ENCODE measurements at regions of chr18 and their contacts with region 1.

Region 1: DNA sequence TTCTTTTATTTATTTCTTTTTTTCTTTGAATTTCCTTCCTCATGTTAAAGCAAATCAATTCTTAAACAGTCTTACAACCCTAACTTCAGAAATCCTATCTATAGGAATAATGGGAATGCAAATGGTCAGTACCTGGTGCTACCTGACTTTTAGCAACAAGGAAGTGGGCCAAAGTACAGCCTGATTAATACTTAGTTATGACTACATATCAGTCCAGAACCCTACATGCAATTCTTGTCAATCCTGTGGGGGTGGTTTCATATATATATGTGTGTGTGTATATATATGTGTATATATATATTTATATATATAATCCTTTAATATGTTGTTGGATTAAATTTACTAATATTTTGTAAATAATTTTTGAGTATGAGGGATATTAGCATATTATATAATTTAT is 14.8 kb upstream of the TRAPPC8 start:
- DNase-seq: no peak
- H3K4me3 Mint-ChIP-seq: no peak overlapping the region
- H3K27ac Mint-ChIP-seq: no peak overlapping the region
- H3K4me1 Mint-ChIP-seq: peaks cover 1% of the 10 kb centered on the region
- H3K27me3 Mint-ChIP-seq: no peaks in the 10 kb centered on the region

Region 2: DNA sequence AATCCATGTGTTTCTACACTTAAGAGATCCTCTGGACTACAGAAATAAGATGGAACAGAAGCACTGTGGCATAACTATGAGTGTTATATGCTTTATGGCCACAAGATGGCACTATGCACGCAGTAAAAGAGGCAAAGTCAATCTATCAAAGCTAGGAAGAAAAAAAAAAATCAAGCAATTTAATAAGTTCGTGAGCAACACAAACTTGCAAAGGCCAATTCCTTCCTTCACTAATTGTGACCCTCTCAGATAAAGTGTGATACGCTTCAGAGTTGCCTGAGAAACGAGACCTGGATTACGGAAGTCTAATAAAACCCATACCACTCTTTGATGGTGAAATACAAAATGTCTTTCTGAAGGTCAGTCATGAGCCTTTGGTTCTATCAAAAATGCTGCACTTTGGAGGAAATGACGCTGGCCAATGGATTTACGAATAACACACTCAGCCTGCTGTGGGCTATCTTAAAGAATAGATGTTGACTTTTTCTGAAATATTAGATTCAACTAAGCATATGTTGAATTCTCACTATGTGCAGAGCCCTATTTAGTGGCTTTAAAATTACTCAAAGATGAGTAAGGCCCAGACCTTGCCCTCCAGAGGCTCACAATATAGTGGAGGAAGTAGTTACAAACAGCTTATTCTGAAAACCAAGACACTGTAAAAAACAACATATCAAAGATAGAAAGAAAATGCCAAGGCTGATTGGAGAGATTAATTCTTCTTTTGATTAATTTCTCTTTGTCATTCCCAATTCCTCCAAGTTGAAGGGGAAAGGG is 401.6 kb before region 1 on chr18:
- intact Hi-C with region 1: loop called (anchors 5 kb)
- DNase-seq: no peak
- H3K4me3 Mint-ChIP-seq: no peak overlapping the region
- H3K27ac Mint-ChIP-seq: no peak overlapping the region
- H3K4me1 Mint-ChIP-seq: no peaks in the 10 kb centered on the region
- H3K27me3 Mint-ChIP-seq: peaks cover 7% of the 10 kb centered on the region

Region 3: GRCh38 chr18:31648966-31649429 is 308.7 kb before region 1 on chr18:
- intact Hi-C with region 1: no loop called
- DNase-seq: no peak
- H3K4me3 Mint-ChIP-seq: no peak overlapping the region
- H3K27ac Mint-ChIP-seq: no peak overlapping the region
- H3K4me1 Mint-ChIP-seq: peaks cover 27% of the 10 kb centered on the region
- H3K27me3 Mint-ChIP-seq: peaks cover 25% of the 10 kb centered on the region

Region 4: DNA sequence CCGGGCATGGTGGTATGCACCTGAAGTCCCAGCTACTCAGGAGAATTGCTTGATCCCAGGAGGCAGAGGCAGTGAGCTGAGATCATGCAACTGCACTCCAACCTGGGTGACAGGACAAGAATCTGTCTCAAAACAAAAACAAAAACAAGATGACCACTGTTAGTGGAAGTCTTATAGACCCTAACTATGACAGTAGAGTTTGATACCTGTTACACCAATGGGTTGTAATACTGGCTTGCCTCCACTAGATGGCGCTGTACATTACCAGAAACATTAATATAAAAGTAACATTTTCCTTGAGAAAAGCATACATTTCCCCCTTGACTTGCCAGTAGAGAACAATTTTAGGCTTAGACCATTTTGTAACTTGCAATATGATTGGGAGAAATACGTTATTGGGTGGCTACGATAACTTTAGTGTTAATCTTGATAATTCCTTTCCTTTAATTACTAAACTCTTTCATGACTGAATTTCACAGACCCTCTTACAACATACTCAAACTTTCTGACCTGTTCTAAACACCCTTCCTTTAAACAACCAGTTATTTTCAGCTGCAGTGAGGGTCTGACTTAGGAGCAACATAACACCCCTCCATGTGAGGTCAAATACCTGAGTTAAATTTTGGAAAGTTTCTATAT is 216.5 kb before region 1 on chr18:
- intact Hi-C with region 1: loop called (anchors 2 kb)
- DNase-seq: no peak
- H3K4me3 Mint-ChIP-seq: no peak overlapping the region
- H3K27ac Mint-ChIP-seq: no peak overlapping the region
- H3K4me1 Mint-ChIP-seq: no peaks in the 10 kb centered on the region
- H3K27me3 Mint-ChIP-seq: no peaks in the 10 kb centered on the region

Region 5: DNA sequence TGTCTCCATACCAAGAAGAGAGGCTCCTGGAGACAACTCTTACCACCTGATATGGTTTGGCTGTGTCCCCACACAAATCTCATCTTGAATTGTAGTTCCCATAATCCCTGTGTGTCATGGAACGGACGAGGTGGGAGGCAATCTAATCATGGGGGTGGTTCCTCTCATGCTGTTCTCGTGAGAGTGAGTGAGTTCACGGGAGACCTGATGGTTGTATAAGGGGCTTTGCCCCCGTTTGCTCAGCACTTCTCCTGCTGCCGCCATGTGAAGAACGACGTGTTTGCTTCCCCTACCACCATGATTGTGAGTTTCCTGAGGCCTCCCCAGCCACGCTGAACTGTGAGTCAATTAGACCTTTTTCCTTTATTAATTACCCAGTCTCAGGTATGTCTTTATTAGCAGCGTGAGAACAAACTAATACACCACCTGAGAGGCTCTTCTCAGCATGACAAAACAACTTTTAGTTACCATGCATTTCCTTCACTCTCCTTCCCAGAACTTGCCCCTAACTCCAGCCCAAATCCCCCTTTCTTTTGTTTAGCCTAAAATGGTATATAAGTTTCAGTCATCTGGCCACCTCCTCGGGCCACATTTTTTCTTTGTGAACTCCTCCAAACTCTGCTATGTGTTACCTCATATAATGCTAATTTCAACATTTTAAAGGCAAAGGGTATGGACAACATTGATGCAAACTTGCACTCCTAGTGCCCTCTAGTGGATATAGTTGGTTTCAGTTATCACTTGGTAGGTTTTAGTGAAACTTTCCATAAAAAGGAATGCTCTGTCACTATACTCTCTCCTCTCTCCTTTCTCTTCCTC is 138.4 kb before region 1 on chr18:
- intact Hi-C with region 1: loop called (anchors 2 kb)
- DNase-seq: no peak
- H3K4me3 Mint-ChIP-seq: no peak overlapping the region
- H3K27ac Mint-ChIP-seq: no peak overlapping the region
- H3K4me1 Mint-ChIP-seq: no peaks in the 10 kb centered on the region
- H3K27me3 Mint-ChIP-seq: peaks cover 8% of the 10 kb centered on the region

Region 6: DNA sequence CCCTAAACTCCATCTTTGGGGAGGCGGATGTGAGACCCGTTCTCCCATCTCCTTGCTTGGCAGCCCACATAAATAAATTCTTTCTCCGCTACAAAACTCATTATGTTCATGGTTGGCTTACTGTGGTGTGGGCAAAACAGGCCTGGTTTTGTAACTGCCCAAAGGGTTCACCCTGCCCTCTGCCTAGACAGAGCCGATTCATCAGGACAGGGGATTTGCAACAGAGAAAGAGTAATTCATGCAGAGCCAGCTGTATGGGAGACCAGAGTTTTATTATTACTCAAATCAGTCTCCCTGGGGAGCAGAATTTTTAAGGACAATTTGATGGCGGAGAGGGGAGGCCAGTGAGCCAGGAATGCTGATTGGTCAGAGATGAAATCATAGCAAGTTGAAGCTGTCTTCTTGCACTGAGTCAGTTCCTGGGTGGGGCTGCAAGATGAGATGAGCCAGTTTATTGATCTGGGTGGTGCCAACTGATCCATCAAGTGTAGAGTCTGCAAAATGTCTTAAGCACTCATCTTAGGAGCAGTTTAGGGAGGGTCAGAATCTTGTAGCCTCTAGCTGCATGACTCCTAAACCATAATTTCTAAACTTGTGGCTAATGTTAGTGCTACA is 52.5 kb after region 1 on chr18:
- intact Hi-C with region 1: no loop called
- DNase-seq: no peak
- H3K4me3 Mint-ChIP-seq: no peak overlapping the region
- H3K27ac Mint-ChIP-seq: no peak overlapping the region
- H3K4me1 Mint-ChIP-seq: peaks cover 11% of the 10 kb centered on the region
- H3K27me3 Mint-ChIP-seq: no peaks in the 10 kb centered on the region

Region 7: GRCh38 chr18:32383050-32383819 is 425.5 kb after region 1 on chr18:
- intact Hi-C with region 1: no loop called
- DNase-seq: no peak
- H3K4me3 Mint-ChIP-seq: no peak overlapping the region
- H3K27ac Mint-ChIP-seq: no peak overlapping the region
- H3K4me1 Mint-ChIP-seq: peaks cover 3% of the 10 kb centered on the region
- H3K27me3 Mint-ChIP-seq: peaks cover 39% of the 10 kb centered on the region